Aorta (tissue), 5 donors: ENCODE measurements at regions of chr3 and their contacts with region 1.

Region 1: DNA sequence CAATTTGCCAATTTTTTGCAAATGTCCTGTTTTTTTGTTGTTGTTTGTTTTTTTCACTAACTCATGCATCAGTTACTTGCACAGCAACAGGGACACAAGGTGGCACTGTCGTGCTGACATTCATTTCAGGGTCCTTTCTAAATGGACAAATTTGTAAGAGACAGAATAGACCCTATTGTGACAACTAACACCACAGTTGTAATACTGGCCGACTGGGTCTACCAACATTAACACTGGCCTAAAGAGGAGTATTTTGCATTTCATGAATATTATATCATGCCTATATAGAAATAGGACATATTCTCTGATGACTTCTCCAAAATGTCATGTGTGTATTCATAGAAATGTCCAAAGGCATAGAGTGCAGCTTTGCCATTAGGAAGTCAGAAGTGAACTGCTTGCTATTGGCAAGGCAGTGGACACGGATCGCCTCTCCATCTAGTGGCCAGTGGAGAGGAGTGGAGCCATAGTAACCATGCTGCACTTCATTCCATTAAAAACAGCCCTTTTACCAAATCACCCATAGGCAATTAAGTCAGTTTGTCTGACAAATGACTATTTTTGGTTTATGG is 54.8 kb downstream of the ZBTB20 start:
- DNase-seq: peak; percentile 74 to 79
- ATAC-seq: peak; percentile 95
- H3K4me3 ChIP-seq: no peak overlapping the region
- H3K27ac ChIP-seq: no peak overlapping the region
- H3K4me1 ChIP-seq: peaks cover 3% of the 10 kb centered on the region in 2 donors
- H3K27me3 ChIP-seq: no peaks in the 10 kb centered on the region

Region 2: GRCh38 chr3:114383875-114384557 is 708.3 kb before region 1 on chr3:
- intact Hi-C with region 1: loop called (anchors 5 kb)
- DNase-seq: peak; percentile 87 to 89
- ATAC-seq: peak; percentile 94
- H3K4me3 ChIP-seq: peak overlapping the region; percentile 61 to 87
- H3K27ac ChIP-seq: peak overlapping the region in 1 of 2 donors; percentile 28
- H3K4me1 ChIP-seq: peaks cover 4 to 10% of the 10 kb centered on the region in 2 donors
- H3K27me3 ChIP-seq: no peaks in the 10 kb centered on the region

Region 3: DNA sequence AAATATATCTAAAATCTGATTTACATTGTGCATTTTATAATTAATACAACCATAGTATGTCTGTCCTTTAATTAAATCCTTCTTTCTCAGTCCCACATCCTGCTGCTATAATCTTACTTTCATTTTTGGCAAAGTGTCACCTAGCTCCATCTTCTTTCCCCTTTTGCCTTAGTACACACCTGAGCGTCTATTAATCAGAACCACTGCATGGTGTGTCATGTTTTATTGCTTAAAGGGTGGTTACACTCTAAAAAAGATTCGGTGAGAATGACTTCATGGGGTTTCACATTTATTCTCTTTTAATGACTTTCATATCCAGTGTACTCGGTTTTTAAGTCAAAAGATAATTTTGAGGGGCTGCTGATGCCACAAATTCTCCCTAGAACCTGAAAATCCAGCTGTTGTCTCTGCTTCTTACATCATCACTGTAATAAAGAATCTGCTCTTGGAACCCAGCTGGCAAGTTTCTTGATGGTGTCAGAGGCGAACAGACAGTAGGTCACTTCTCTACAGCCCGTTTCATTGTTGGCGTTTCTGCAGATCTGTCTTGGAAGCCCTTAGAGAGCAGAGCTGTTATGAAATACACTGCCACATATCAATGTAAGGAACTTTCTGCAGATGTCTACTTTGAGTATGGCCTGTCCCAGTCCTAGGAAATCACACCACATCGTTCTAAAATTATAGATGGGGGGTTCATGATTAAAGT is 698.8 kb before region 1 on chr3:
- intact Hi-C with region 1: loop called in 1 of 2 experiments (anchors 5 kb)
- DNase-seq: no peak
- ATAC-seq: no peak
- H3K4me3 ChIP-seq: no peak overlapping the region
- H3K27ac ChIP-seq: no peak overlapping the region
- H3K4me1 ChIP-seq: no peaks in the 10 kb centered on the region
- H3K27me3 ChIP-seq: no peaks in the 10 kb centered on the region

Region 4: GRCh38 chr3:115019900-115020299 is 72.4 kb before region 1 on chr3:
- intact Hi-C with region 1: no loop called
- DNase-seq: no peak
- ATAC-seq: no peak
- H3K4me3 ChIP-seq: no peak overlapping the region
- H3K27ac ChIP-seq: no peak overlapping the region
- H3K4me1 ChIP-seq: no peaks in the 10 kb centered on the region
- H3K27me3 ChIP-seq: no peaks in the 10 kb centered on the region

Region 5: DNA sequence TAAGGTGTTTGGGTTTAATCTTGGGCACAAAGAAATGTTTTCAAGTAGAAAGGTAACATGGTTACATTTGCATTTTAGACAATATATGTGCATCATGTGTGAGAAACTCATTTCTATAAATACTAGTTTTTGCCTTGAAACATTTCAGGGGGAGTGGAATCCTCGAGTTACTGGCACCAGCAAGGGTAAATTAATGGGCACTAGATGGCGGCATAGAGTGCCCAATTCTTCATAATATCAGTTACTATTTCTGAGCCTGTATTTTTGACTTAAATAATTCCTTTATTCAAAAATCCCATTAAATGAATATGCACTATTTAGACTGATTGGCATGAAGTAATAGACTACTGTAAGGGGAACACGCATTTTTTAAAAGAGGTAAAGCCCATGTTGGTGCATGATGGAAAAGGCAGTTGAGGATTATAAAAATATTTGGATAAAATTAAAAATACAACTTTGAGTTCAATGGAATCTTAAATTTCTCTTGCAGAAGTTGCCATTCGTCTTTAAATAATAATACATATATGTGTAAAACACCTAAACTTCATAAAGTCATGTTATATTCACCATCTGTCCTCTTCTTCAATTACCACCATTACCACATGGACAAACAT is 51.5 kb before region 1 on chr3:
- intact Hi-C with region 1: loop called in 1 of 2 experiments (anchors 2 kb)
- DNase-seq: no peak
- ATAC-seq: no peak
- H3K4me3 ChIP-seq: no peak overlapping the region
- H3K27ac ChIP-seq: no peak overlapping the region
- H3K4me1 ChIP-seq: no peaks in the 10 kb centered on the region
- H3K27me3 ChIP-seq: no peaks in the 10 kb centered on the region

Region 6: GRCh38 chr3:115147329-115148141 is 55.2 kb after region 1 on chr3:
- intact Hi-C with region 1: loop called in 1 of 2 experiments (anchors 10 kb)
- DNase-seq: peak; percentile 98 to 99
- ATAC-seq: peak; percentile 95
- H3K4me3 ChIP-seq: peak overlapping the region; percentile 12 to 36
- H3K27ac ChIP-seq: peak overlapping the region; percentile 71 to 73
- H3K4me1 ChIP-seq: no peaks in the 10 kb centered on the region
- H3K27me3 ChIP-seq: no peaks in the 10 kb centered on the region